ENCODE measurements at regions of chr16 and their contacts with region 1.

Region 1: GRCh38 chr16:180938-181667 is 844 bp downstream of the HBQ1 start:
- DNase-seq: peak; percentile 75 to 88 (median 86)
- H3K4me3 ChIP-seq: peak overlapping the region in 4 of 7 experiments; percentile 28 to 63 (median 48)
- H3K27ac ChIP-seq: no peak overlapping the region
- H3K4me1 ChIP-seq: peaks cover 0 to 20% (median 15%) of the 10 kb centered on the region in 4 experiments
- H3K27me3 ChIP-seq: peaks cover 0 to 36% (median 11%) of the 10 kb centered on the region in 5 experiments

Region 2: GRCh38 chr16:117379-118365 is 63.4 kb before region 1 on chr16:
- CTCF ChIA-PET with region 1: interaction called, 59 read pairs
- POLR2A ChIA-PET with region 1: no interaction called
- DNase-seq: peak; percentile 72 to 77 (median 73)
- H3K4me3 ChIP-seq: no peak overlapping the region
- H3K27ac ChIP-seq: no peak overlapping the region
- H3K4me1 ChIP-seq: peaks cover 0 to 16% (median 12%) of the 10 kb centered on the region in 4 experiments
- H3K27me3 ChIP-seq: no peaks in the 10 kb centered on the region

Region 3: DNA sequence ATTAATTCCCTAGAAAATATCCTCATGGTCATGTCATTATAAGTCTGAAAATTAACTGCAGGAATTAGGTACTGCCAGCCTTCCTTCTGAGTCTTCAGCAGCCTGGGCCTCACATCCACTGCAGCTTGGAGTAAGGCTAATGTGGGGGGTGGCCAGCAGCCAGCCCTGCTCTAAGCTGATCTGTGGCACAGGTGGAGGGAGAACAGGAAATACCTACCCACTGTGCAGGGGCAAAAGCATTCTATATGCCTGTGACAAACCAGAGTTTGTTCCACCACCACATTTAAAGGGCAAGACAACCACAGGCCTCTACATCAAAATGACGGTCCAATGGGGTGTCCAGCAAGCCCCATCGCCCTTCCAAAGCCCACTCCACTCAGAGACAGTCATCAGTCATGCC is 52.0 kb before region 1 on chr16:
- CTCF ChIA-PET with region 1: interaction called, 10 read pairs
- POLR2A ChIA-PET with region 1: no interaction called
- DNase-seq: no peak
- H3K4me3 ChIP-seq: no peak overlapping the region
- H3K27ac ChIP-seq: no peak overlapping the region
- H3K4me1 ChIP-seq: peaks cover 0 to 5% (median 1%) of the 10 kb centered on the region in 4 experiments
- H3K27me3 ChIP-seq: no peaks in the 10 kb centered on the region

Region 4: GRCh38 chr16:168424-168823 is 12.7 kb before region 1 on chr16:
- CTCF ChIA-PET with region 1: interaction called, 12 read pairs
- POLR2A ChIA-PET with region 1: interaction called, 4 read pairs
- DNase-seq: peak in 1 of 3 donors; percentile 7
- H3K4me3 ChIP-seq: no peak overlapping the region
- H3K27ac ChIP-seq: no peak overlapping the region
- H3K4me1 ChIP-seq: peaks cover 0 to 29% (median 19%) of the 10 kb centered on the region in 4 experiments
- H3K27me3 ChIP-seq: peaks cover 0 to 74% (median 34%) of the 10 kb centered on the region in 5 experiments

Region 5: GRCh38 chr16:203246-203645 is 22.1 kb after region 1 on chr16:
- CTCF ChIA-PET with region 1: no interaction called
- POLR2A ChIA-PET with region 1: no interaction called
- DNase-seq: no peak
- H3K4me3 ChIP-seq: no peak overlapping the region
- H3K27ac ChIP-seq: no peak overlapping the region
- H3K4me1 ChIP-seq: no peaks in the 10 kb centered on the region
- H3K27me3 ChIP-seq: no peaks in the 10 kb centered on the region

Region 6: DNA sequence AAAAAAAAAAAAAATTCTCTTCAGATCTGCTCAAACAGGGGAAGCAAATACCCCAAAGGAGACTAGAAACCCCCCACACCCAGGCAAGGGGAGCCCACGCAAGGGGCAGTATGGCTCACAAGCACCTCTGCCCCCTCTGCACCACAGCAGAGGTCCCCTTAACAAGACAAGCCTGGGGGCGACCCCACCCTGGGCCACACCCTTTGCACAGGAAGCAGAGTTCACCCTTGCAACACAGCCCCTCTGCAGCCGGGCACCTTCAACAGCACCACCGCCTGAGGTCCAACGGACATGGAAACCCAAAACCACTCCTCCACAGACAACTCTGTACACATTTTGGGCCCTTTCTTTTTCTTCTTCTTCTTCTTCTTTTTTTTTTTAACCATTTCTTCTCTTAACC is 158.6 kb after region 1 on chr16:
- CTCF ChIA-PET with region 1: no interaction called
- POLR2A ChIA-PET with region 1: no interaction called
- DNase-seq: peak in 2 of 3 donors; percentile 56 to 64
- H3K4me3 ChIP-seq: peak overlapping the region in 3 of 7 experiments; percentile 8 to 34 (median 28)
- H3K27ac ChIP-seq: peak overlapping the region in 1 of 2 experiments; percentile 14
- H3K4me1 ChIP-seq: peaks cover 0 to 47% (median 32%) of the 10 kb centered on the region in 4 experiments
- H3K27me3 ChIP-seq: no peaks in the 10 kb centered on the region

Measured in common myeloid progenitor, CD34-positive (primary cell).